Panc1 (cell line): ENCODE measurements at regions of chr1 and their contacts with region 1.

Region 1: GRCh38 chr1:46527474-46528296 is 23.8 kb downstream of the KNCN start:
- DNase-seq: peak; percentile 71
- ATAC-seq: peak; percentile 89
- H3K4me3 ChIP-seq: no peak overlapping the region
- H3K27ac ChIP-seq: no peak overlapping the region
- H3K4me1 ChIP-seq: peaks cover 2% of the 10 kb centered on the region; the same call in 1 of the 2 replicates
- H3K27me3 ChIP-seq: no peaks in the 10 kb centered on the region
- CTCF ChIP-seq: peak; percentile 98

Region 2: DNA sequence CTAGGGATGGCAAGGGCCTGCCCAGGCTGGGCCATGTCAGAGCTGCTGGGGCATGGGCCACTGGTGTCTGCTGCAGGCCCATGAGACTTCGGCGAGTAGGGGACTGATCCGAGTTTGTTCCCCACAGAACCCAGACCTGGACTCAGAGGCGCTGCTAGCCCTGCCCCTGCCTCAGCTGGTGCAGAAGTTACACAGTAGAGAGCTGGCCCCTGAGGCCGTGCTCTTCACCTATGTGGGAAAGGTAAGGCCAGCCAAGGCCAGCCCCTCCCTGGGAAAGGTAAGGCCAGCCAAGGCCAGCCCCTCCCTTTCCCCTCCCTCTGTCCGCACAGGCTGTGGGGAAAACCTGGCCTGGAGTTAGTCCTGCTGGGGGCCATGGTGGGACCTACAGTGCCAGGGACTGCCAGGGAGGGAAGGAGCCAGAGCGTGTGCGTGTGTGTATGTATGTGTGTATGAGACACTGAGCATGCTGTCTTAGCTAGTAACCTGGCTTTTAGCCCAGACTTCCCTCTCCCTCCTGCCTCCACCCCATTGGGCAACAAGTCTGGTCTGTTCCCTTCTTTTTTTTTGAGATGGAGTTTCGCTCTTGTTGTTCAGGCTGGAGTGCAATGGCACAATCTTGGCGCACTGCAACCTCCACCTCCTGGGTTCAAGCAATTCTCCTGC is 125.6 kb before region 1 on chr1:
- CTCF ChIA-PET with region 1: no interaction called
- POLR2A ChIA-PET with region 1: no interaction called
- in situ Hi-C with region 1: no loop called
- intact Hi-C with region 1: loop called (anchors 1 kb)
- DNase-seq: no peak
- ATAC-seq: peak; percentile 79
- H3K4me3 ChIP-seq: peak overlapping the region in 1 of 2 experiments; percentile 20; a peak in 1 of 4 replicates
- H3K27ac ChIP-seq: no peak overlapping the region
- H3K4me1 ChIP-seq: peaks cover 14% of the 10 kb centered on the region
- H3K27me3 ChIP-seq: no peaks in the 10 kb centered on the region
- CTCF ChIP-seq: no peak

Region 3: DNA sequence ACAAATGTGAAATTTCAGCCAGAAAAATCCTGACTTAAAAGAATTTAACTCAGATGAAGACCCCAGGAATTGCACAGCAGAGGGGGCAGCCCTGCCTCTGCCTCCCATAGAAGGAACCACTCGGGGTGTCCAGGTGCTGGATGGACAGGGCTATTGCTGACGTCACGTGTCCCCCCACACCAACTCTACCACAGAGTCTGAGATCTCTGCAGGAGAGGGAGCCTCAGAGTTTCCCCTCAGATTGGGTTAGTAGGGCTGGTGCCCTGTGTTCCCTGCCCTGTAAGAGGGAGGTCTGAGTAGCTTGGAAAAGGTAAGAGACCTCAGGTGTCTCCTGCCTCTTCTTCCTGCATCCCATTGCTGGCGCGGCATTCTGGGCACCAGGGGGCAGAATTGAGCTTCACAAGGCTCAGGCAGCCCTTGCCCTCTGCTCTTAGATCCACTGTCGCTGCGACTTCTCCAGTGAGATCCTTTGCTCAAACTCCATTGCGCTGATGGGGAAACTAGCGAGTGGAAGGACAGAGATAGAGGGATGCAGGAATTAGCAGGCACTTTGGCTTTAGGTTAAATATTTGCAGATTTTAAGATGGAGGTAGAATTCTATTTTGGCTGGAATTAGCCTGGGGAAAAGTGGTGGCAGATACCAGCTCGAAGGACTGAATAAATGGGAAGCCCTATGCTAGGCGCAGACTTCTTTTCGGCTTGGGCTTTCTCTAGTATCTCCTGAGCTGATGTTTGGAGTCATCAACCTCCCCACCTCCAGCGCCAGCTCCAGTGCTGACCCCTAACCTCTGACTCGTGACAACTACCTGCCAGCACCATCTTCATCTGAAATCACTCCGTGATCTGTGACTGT is 80.8 kb before region 1 on chr1:
- CTCF ChIA-PET with region 1: interaction called, 34 read pairs
- POLR2A ChIA-PET with region 1: no interaction called
- in situ Hi-C with region 1: no loop called
- intact Hi-C with region 1: loop called (anchors 1 kb)
- DNase-seq: peak; percentile 58
- ATAC-seq: peak; percentile 80
- H3K4me3 ChIP-seq: no peak overlapping the region
- H3K27ac ChIP-seq: no peak overlapping the region
- H3K4me1 ChIP-seq: peaks cover 7% of the 10 kb centered on the region; the same call in 1 of the 2 replicates
- H3K27me3 ChIP-seq: no peaks in the 10 kb centered on the region
- CTCF ChIP-seq: peak; percentile 95

Region 4: DNA sequence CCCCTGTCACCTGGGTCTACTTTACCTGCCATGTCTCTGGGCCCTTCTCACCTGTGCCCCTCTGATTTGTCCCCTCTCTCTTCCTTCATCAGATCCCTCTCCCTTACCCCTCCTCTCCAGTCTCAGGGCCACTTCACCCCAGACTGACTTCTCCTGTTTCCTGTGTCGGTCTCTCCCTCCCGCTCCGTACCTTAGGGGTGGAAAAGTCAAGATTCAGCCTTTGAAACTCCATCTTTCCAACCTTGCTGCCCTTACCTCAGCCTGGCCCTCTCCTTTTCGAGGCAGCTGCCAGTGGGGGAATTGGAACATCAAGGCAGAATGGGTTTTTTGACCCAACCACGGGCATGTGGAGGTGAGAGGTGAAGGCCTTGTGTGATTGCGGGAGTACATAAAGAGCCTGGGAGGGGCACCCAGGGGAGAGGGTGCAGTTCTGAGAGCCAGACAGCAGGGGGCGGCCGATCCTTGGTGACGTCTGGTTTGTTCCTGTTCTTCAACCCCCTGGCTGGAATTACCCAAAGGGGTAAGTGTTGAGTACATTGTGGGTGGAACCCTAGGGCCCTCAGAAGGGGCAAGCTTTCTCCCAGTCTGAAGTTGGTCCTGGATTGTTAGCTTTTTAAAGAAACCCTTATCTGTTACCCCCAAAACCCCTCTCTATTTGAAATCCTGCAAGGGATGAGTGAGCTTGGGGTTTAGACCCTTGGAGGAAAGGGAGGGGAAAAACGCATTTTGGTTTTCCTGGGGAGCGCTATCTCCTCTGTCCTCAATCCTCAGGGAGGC is 50.3 kb before region 1 on chr1:
- CTCF ChIA-PET with region 1: interaction called, 6 read pairs
- POLR2A ChIA-PET with region 1: no interaction called
- in situ Hi-C with region 1: no loop called
- intact Hi-C with region 1: loop called (anchors 1 kb)
- DNase-seq: peak; percentile 42
- ATAC-seq: peak; percentile 87
- H3K4me3 ChIP-seq: no peak overlapping the region
- H3K27ac ChIP-seq: no peak overlapping the region
- H3K4me1 ChIP-seq: no peaks in the 10 kb centered on the region
- H3K27me3 ChIP-seq: no peaks in the 10 kb centered on the region
- CTCF ChIP-seq: peak; percentile 95

Region 5: GRCh38 chr1:46547481-46548383 is 20.0 kb after region 1 on chr1:
- CTCF ChIA-PET with region 1: no interaction called
- POLR2A ChIA-PET with region 1: no interaction called
- in situ Hi-C with region 1: no loop called
- intact Hi-C with region 1: no loop called
- DNase-seq: peak; percentile 27
- ATAC-seq: peak; percentile 81
- H3K4me3 ChIP-seq: peak overlapping the region in 1 of 2 experiments; percentile 39; a peak in 2 of 4 replicates
- H3K27ac ChIP-seq: no peak overlapping the region
- H3K4me1 ChIP-seq: no peaks in the 10 kb centered on the region
- H3K27me3 ChIP-seq: no peaks in the 10 kb centered on the region
- CTCF ChIP-seq: peak; percentile 82

Region 6: GRCh38 chr1:46587069-46587468 is 59.4 kb after region 1 on chr1:
- CTCF ChIA-PET with region 1: no interaction called
- POLR2A ChIA-PET with region 1: no interaction called
- in situ Hi-C with region 1: no loop called
- intact Hi-C with region 1: no loop called
- DNase-seq: no peak
- ATAC-seq: no peak
- H3K4me3 ChIP-seq: no peak overlapping the region
- H3K27ac ChIP-seq: no peak overlapping the region
- H3K4me1 ChIP-seq: no peaks in the 10 kb centered on the region
- H3K27me3 ChIP-seq: no peaks in the 10 kb centered on the region
- CTCF ChIP-seq: no peak

Region 7: DNA sequence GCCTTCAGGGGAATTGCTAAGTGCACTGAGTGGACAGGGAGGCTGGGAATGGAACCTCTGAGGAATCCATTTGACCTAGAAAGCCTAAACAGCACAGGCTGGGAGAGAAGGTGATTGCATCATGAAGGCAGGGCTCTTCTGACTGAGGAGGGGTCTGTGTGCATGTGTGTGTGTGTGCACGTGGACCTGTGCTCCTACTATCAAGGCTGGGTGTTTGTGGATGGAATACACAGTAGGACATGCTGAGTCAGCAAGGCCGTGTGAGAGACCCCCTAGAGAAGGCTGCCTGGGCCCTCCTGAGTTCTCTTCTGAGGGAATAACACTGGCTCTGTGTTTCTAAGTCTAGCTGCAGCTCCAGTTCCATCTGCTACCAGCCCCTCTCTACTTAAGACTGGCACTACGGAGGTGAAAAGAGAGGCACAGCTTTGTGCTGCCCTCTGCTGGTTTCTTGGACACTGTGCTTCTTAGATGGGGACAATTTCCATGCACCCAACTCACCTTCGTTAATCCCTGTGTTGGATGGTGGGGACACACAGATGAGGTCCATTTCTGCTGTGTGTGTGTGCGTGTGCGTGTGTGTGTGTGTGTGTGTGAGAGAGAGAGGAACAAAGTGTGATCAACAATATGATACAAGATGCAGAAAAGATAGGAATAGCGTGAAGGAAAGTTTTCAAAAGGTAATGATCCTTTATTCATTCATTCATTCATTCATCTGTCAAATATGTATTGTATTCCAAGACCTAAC is 197.5 kb after region 1 on chr1:
- CTCF ChIA-PET with region 1: no interaction called
- POLR2A ChIA-PET with region 1: no interaction called
- in situ Hi-C with region 1: no loop called
- intact Hi-C with region 1: loop called (anchors 10 kb)
- DNase-seq: peak; percentile 77
- ATAC-seq: peak; percentile 97
- H3K4me3 ChIP-seq: no peak overlapping the region
- H3K27ac ChIP-seq: no peak overlapping the region
- H3K4me1 ChIP-seq: peaks cover 3% of the 10 kb centered on the region; the same call in 1 of the 2 replicates
- H3K27me3 ChIP-seq: no peaks in the 10 kb centered on the region; the same call in 1 of the 2 replicates
- CTCF ChIP-seq: peak; percentile 94